Head of caudate nucleus (tissue), 42 donors: ENCODE measurements at regions of chr14 and their contacts with region 1.

Region 1: DNA sequence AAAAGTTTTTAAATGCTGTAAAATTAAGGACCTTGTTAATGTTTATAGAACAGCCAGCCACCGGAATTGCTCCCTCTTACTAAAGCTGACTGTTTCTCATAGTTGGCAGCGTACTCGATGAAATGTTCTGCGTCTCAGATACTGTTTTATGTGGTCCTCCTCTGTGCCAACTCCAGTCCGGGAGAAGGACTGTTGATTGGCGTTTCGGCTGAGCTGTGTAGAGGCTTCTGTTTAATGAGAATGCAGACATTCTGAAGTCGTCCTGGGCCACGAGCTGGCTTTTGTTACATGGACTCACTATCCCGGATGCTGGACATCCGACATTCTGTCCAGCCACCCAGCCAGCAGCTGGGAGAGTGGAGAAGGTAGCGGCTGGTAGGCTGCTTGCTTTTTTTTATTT is 75.4 kb downstream of the WDR20 start:
- DNase-seq: peak in 41 of 42 donors; percentile 22 to 89 (median 69)

Region 2: GRCh38 chr14:102096214-102097114 is 118.6 kb before region 1 on chr14:
- intact Hi-C with region 1: loop called (anchors 10 kb)
- DNase-seq: peak; percentile 83 to 97 (median 91)

Region 3: GRCh38 chr14:102139248-102140026 is 75.6 kb before region 1 on chr14 and contains the start of gene WDR20:
- intact Hi-C with region 1: loop called (anchors 10 kb)
- DNase-seq: peak; percentile 94 to 100 (median 98)

Region 4: DNA sequence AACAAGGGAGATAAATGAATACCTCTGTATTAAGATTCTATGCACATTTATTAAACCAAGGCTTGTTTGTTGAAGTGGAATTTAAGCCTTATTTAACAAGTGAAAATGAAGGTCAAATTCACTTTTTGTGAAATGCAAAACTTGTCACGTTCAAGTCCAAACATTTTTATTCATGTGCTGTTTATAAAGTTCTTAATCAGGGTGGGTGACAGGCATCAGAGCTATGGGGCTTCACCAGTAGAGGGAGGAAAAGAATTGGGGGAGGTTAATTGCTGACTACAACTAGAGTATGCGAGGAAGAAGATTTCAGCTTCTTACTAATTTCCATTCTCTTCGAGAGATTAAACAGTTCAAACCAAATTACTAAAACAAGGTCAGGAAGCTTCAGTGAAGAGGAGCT is 80.2 kb after region 1 on chr14:
- intact Hi-C with region 1: no loop called
- DNase-seq: no peak

Region 5: GRCh38 chr14:102316743-102317563 is 101.9 kb after region 1 on chr14:
- intact Hi-C with region 1: no loop called
- DNase-seq: peak; percentile 91 to 99 (median 96)